Right cardiac atrium (tissue), 5 donors: ENCODE measurements at regions of chr16 and their contacts with region 1.

Region 1: GRCh38 chr16:1713933-1714332 is 7.9 kb downstream of the MAPK8IP3 start:
- DNase-seq: no peak
- ATAC-seq: no peak
- H3K4me3 ChIP-seq: no peak overlapping the region
- H3K27ac ChIP-seq: no peak overlapping the region
- H3K4me1 ChIP-seq: peaks cover 5% of the 10 kb centered on the region
- H3K27me3 ChIP-seq: no peaks in the 10 kb centered on the region

Region 2: GRCh38 chr16:1778200-1779179 is 64.6 kb after region 1 on chr16:
- intact Hi-C with region 1: loop called in 1 of 4 experiments (anchors 5 kb)
- DNase-seq: peak in 2 of 3 donors; percentile 50 to 54
- ATAC-seq: no peak
- H3K4me3 ChIP-seq: no peak overlapping the region
- H3K27ac ChIP-seq: no peak overlapping the region
- H3K4me1 ChIP-seq: peaks cover 8% of the 10 kb centered on the region
- H3K27me3 ChIP-seq: no peaks in the 10 kb centered on the region